ENCODE measurements at regions of chr6 and their contacts with region 1.

Region 1: DNA sequence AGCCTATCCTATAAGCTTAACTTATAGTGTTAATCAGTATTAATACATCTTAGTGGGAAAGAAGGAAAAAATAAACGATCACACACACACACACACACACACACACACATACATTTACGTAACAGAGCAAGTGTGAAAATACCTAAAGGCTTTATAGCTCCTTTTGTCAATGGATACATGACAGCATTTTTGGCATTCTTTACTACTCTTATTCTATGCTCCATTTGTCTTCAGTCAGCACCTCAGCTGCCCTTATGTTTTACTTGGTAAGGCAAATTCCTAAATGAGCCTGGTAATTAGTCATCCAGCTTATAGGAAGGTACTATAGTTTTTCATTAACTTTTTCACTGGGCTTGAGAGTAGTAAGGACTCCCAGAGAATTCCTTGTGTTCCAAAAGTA is 25.1 kb upstream of the SLC17A3 start:
- DNase-seq: no peak
- CTCF ChIP-seq: no peak

Region 2: DNA sequence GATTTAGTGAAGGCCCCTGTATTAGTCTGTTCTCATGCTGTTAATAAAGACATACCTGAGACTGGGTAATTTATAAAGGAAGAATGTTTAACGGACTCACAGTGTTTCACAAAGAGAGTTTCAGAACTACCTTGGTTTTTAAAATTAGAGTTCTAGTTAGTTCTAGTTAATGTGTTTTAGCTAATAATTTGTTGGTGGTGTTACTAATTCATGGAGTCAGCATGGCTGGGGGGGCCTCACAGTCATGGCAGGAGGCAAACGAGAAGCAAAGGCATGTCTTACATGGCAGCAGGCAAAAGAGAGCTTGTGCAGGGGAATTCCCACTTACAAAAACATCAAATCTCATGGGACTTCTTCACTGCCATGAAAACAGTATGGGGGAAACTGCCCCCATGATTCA is 13.1 kb before region 1 on chr6:
- CTCF ChIA-PET with region 1: interaction called, 10 read pairs
- POLR2A ChIA-PET with region 1: no interaction called
- DNase-seq: no peak
- CTCF ChIP-seq: no peak

Region 3: GRCh38 chr6:25927178-25927577 is 28.1 kb after region 1 on chr6:
- CTCF ChIA-PET with region 1: no interaction called
- POLR2A ChIA-PET with region 1: no interaction called
- DNase-seq: no peak
- CTCF ChIP-seq: no peak

Measured in GM10248 (cell line).